ENCODE measurements at regions of chr16 and their contacts with region 1.

Region 1: GRCh38 chr16:55465077-55465896 is 13.7 kb upstream of the MMP2 start:
- DNase-seq: peak; percentile 81 to 91 (median 90)
- ATAC-seq: peak; percentile 97
- H3K4me3 ChIP-seq: no peak overlapping the region
- H3K27ac ChIP-seq: no peak overlapping the region
- H3K4me1 ChIP-seq: no peaks in the 10 kb centered on the region
- H3K27me3 ChIP-seq: peaks cover 3 to 17% of the 10 kb centered on the region in 2 experiments; a peak in 3 of 5 replicates
- CTCF ChIP-seq: peak; percentile 100
- EP300 ChIP-seq: no peak
- POLR2A ChIP-seq: no peak
- RAD21 ChIP-seq: peak; percentile 99 to 100

Region 2: GRCh38 chr16:54748611-54749190 is 716.6 kb before region 1 on chr16:
- CTCF ChIA-PET with region 1: no interaction called
- POLR2A ChIA-PET with region 1: no interaction called
- in situ Hi-C with region 1: no loop called
- intact Hi-C with region 1: no loop called
- DNase-seq: no peak
- ATAC-seq: no peak
- H3K4me3 ChIP-seq: no peak overlapping the region
- H3K27ac ChIP-seq: no peak overlapping the region
- H3K4me1 ChIP-seq: no peaks in the 10 kb centered on the region
- H3K27me3 ChIP-seq: no peaks in the 10 kb centered on the region; a peak in 1 of 5 replicates
- CTCF ChIP-seq: no peak
- EP300 ChIP-seq: no peak
- POLR2A ChIP-seq: no peak
- RAD21 ChIP-seq: no peak

Region 3: GRCh38 chr16:55207693-55208428 is 257.4 kb before region 1 on chr16:
- CTCF ChIA-PET with region 1: no interaction called
- POLR2A ChIA-PET with region 1: no interaction called
- in situ Hi-C with region 1: no loop called
- intact Hi-C with region 1: no loop called
- DNase-seq: no peak
- ATAC-seq: no peak
- H3K4me3 ChIP-seq: no peak overlapping the region
- H3K27ac ChIP-seq: no peak overlapping the region
- H3K4me1 ChIP-seq: no peaks in the 10 kb centered on the region
- H3K27me3 ChIP-seq: no peaks in the 10 kb centered on the region; a peak in 2 of 5 replicates
- CTCF ChIP-seq: no peak
- EP300 ChIP-seq: no peak
- POLR2A ChIP-seq: no peak
- RAD21 ChIP-seq: no peak

Region 4: GRCh38 chr16:55543472-55543871 is 78.2 kb after region 1 on chr16:
- CTCF ChIA-PET with region 1: interaction called, 64 read pairs
- POLR2A ChIA-PET with region 1: interaction called, 3 read pairs
- in situ Hi-C with region 1: loop called (anchors 5 kb)
- intact Hi-C with region 1: loop called (anchors 1 kb)
- DNase-seq: peak in 1 of 4 experiments; percentile 11
- ATAC-seq: no peak
- H3K4me3 ChIP-seq: no peak overlapping the region
- H3K27ac ChIP-seq: no peak overlapping the region
- H3K4me1 ChIP-seq: no peaks in the 10 kb centered on the region
- H3K27me3 ChIP-seq: no peaks in the 10 kb centered on the region
- CTCF ChIP-seq: peak in 1 of 3 experiments; percentile 53; a peak in 2 of 6 replicates
- EP300 ChIP-seq: no peak
- POLR2A ChIP-seq: no peak
- RAD21 ChIP-seq: peak; percentile 55 to 59

Region 5: GRCh38 chr16:55701442-55702319 is 236.4 kb after region 1 on chr16:
- CTCF ChIA-PET with region 1: interaction called, 139 read pairs
- POLR2A ChIA-PET with region 1: no interaction called
- in situ Hi-C with region 1: loop called (anchors 5 kb)
- intact Hi-C with region 1: loop called (anchors 1 kb)
- DNase-seq: peak; percentile 71 to 75 (median 74)
- ATAC-seq: peak; percentile 98
- H3K4me3 ChIP-seq: no peak overlapping the region
- H3K27ac ChIP-seq: no peak overlapping the region
- H3K4me1 ChIP-seq: no peaks in the 10 kb centered on the region
- H3K27me3 ChIP-seq: peaks cover 0 to 4% of the 10 kb centered on the region in 2 experiments; a peak in 3 of 5 replicates
- CTCF ChIP-seq: peak; percentile 74 to 82 (median 78)
- EP300 ChIP-seq: no peak
- POLR2A ChIP-seq: no peak
- RAD21 ChIP-seq: peak; percentile 68 to 85

Region 6: DNA sequence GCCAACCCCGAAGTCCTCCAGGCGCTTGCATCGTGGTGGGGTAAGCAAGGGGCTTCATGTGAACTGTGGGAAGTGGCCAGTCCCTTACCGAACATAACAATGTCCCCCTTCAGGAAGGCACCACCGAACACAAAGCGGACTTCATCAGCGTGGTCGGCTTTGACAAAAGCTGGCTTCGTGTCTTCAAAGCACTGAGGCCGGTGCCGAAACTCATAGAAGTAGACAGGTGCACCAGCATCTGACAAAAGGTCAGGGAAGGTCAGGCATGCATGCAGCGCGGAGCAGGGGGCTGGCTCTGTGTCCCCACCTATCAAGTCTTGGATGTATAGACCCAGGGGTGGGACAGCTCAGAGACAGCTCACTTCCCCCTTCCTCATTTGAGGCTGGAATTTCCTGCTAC is 384.2 kb after region 1 on chr16:
- CTCF ChIA-PET with region 1: no interaction called
- POLR2A ChIA-PET with region 1: no interaction called
- in situ Hi-C with region 1: loop called (anchors 5 kb)
- intact Hi-C with region 1: no loop called
- DNase-seq: no peak
- ATAC-seq: no peak
- H3K4me3 ChIP-seq: no peak overlapping the region
- H3K27ac ChIP-seq: no peak overlapping the region
- H3K4me1 ChIP-seq: no peaks in the 10 kb centered on the region
- H3K27me3 ChIP-seq: peaks cover 7 to 8% of the 10 kb centered on the region in 2 experiments; a peak in 3 of 5 replicates
- CTCF ChIP-seq: no peak
- EP300 ChIP-seq: no peak
- POLR2A ChIP-seq: no peak
- RAD21 ChIP-seq: no peak

Region 7: GRCh38 chr16:56324406-56324805 is 859.1 kb after region 1 on chr16:
- CTCF ChIA-PET with region 1: no interaction called
- POLR2A ChIA-PET with region 1: no interaction called
- in situ Hi-C with region 1: loop called (anchors 10 kb)
- intact Hi-C with region 1: loop called (anchors 2 kb)
- DNase-seq: no peak
- ATAC-seq: no peak
- H3K4me3 ChIP-seq: no peak overlapping the region
- H3K27ac ChIP-seq: no peak overlapping the region
- H3K4me1 ChIP-seq: peaks cover 0 to 4% of the 10 kb centered on the region in 2 experiments; a peak in 1 of 5 replicates
- H3K27me3 ChIP-seq: peaks cover 17 to 59% of the 10 kb centered on the region in 2 experiments; a peak in 4 of 5 replicates
- CTCF ChIP-seq: no peak
- EP300 ChIP-seq: no peak
- POLR2A ChIP-seq: no peak
- RAD21 ChIP-seq: no peak

Measured in K562 (cell line).